ENCODE measurements at regions of chr4 and their contacts with region 1.

Region 1: GRCh38 chr4:169659716-169660670 is 39.6 kb downstream of the CLCN3 start:
- DNase-seq: peak; percentile 33 to 70
- ATAC-seq: peak; percentile 96 to 98 (median 97)
- H3K4me3 ChIP-seq: peak overlapping the region; percentile 70
- H3K27ac ChIP-seq: peak overlapping the region; percentile 83
- H3K4me1 ChIP-seq: peaks cover 54% of the 10 kb centered on the region
- H3K27me3 ChIP-seq: no peaks in the 10 kb centered on the region
- CTCF ChIP-seq: no peak

Region 2: DNA sequence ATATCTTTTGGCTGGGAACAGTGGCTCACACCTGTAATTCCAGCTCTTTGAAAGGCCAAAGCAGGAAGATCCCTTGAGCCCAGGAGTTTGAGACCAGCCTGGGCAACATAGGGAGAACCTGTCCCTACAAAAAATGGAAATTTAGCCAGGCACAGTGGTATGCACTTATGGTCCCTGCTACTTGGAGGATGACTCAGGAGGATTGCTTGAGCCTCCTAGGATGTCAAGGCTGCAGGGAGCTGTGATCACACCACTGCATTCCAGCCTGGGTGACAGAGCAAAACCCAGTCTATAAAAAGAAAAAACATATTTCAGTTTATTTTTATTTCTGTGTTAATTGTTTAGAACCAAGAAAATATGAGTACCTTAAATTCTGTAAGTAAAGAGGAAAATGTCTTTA is 773.6 kb before region 1 on chr4:
- intact Hi-C with region 1: no loop called
- DNase-seq: no peak
- ATAC-seq: peak; percentile 77 to 88 (median 86)
- H3K4me3 ChIP-seq: no peak overlapping the region
- H3K27ac ChIP-seq: peak overlapping the region; percentile 73
- H3K4me1 ChIP-seq: peaks cover 58% of the 10 kb centered on the region
- H3K27me3 ChIP-seq: no peaks in the 10 kb centered on the region
- CTCF ChIP-seq: no peak

Region 3: DNA sequence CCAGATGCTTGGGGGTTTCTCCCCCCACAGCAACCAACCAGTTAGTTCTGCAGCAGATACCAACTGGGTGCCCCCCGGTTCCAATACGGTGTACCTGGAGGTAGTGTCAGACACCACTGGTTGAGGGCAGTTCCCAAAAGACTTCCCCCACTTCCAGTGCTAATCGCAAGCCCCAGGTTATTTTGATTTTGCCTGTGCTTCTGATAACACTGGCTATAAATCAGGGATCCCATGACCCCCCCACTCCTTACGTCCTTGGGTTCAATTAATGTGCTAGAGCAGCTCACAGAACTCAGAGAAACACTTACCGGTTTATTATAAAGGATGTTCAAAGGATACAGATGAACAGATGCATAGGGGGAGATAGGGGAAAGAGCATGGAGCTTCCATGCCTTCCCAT is 34.1 kb before region 1 on chr4:
- intact Hi-C with region 1: loop called (anchors 2 kb)
- DNase-seq: no peak
- ATAC-seq: no peak
- H3K4me3 ChIP-seq: no peak overlapping the region
- H3K27ac ChIP-seq: no peak overlapping the region
- H3K4me1 ChIP-seq: peaks cover 41% of the 10 kb centered on the region
- H3K27me3 ChIP-seq: no peaks in the 10 kb centered on the region
- CTCF ChIP-seq: no peak

Region 4: GRCh38 chr4:169698331-169698730 is 38.3 kb after region 1 on chr4:
- intact Hi-C with region 1: no loop called
- DNase-seq: no peak
- ATAC-seq: no peak
- H3K4me3 ChIP-seq: no peak overlapping the region
- H3K27ac ChIP-seq: no peak overlapping the region
- H3K4me1 ChIP-seq: no peaks in the 10 kb centered on the region
- H3K27me3 ChIP-seq: no peaks in the 10 kb centered on the region
- CTCF ChIP-seq: no peak